GM12878 (cell line): ENCODE measurements at regions of chr11 and their contacts with region 1.

Region 1: GRCh38 chr11:75142714-75143419 is 8.0 kb upstream of the SLCO2B1 start:
- DNase-seq: peak; percentile 55
- ATAC-seq: peak; percentile 78
- H3K4me3 ChIP-seq: no peak overlapping the region
- H3K27ac ChIP-seq: no peak overlapping the region
- H3K4me1 ChIP-seq: peaks cover 24% of the 10 kb centered on the region
- H3K27me3 ChIP-seq: no peaks in the 10 kb centered on the region
- CTCF ChIP-seq: no peak
- EP300 ChIP-seq: no peak
- POLR2A ChIP-seq: no peak
- RAD21 ChIP-seq: no peak

Region 2: GRCh38 chr11:75100314-75100713 is 42.6 kb before region 1 on chr11:
- CTCF ChIA-PET with region 1: interaction called, 20 read pairs
- POLR2A ChIA-PET with region 1: no interaction called
- RAD21 ChIA-PET with region 1: interaction called, 4 read pairs
- SMC1A ChIA-PET with region 1: interaction called, 4 read pairs
- in situ Hi-C with region 1: no loop called
- intact Hi-C with region 1: no loop called
- DNase-seq: peak; percentile 78
- ATAC-seq: peak; percentile 97
- H3K4me3 ChIP-seq: peak overlapping the region; percentile 1; the same call in 1 of the 2 replicates
- H3K27ac ChIP-seq: peak overlapping the region; percentile 57
- H3K4me1 ChIP-seq: peaks cover 8% of the 10 kb centered on the region; the same call in 1 of the 2 replicates
- H3K27me3 ChIP-seq: no peaks in the 10 kb centered on the region
- CTCF ChIP-seq: no peak
- EP300 ChIP-seq: no peak; a peak in 1 of 4 replicates
- POLR2A ChIP-seq: no peak
- RAD21 ChIP-seq: no peak

Region 3: GRCh38 chr11:75113030-75113429 is 29.8 kb before region 1 on chr11:
- CTCF ChIA-PET with region 1: interaction called, 13 read pairs
- POLR2A ChIA-PET with region 1: interaction called, 3 read pairs
- RAD21 ChIA-PET with region 1: no interaction called
- SMC1A ChIA-PET with region 1: interaction called, 3 read pairs
- in situ Hi-C with region 1: no loop called
- intact Hi-C with region 1: no loop called
- DNase-seq: no peak
- ATAC-seq: no peak
- H3K4me3 ChIP-seq: no peak overlapping the region
- H3K27ac ChIP-seq: no peak overlapping the region
- H3K4me1 ChIP-seq: no peaks in the 10 kb centered on the region
- H3K27me3 ChIP-seq: no peaks in the 10 kb centered on the region
- CTCF ChIP-seq: no peak
- EP300 ChIP-seq: no peak
- POLR2A ChIP-seq: no peak
- RAD21 ChIP-seq: no peak

Region 4: DNA sequence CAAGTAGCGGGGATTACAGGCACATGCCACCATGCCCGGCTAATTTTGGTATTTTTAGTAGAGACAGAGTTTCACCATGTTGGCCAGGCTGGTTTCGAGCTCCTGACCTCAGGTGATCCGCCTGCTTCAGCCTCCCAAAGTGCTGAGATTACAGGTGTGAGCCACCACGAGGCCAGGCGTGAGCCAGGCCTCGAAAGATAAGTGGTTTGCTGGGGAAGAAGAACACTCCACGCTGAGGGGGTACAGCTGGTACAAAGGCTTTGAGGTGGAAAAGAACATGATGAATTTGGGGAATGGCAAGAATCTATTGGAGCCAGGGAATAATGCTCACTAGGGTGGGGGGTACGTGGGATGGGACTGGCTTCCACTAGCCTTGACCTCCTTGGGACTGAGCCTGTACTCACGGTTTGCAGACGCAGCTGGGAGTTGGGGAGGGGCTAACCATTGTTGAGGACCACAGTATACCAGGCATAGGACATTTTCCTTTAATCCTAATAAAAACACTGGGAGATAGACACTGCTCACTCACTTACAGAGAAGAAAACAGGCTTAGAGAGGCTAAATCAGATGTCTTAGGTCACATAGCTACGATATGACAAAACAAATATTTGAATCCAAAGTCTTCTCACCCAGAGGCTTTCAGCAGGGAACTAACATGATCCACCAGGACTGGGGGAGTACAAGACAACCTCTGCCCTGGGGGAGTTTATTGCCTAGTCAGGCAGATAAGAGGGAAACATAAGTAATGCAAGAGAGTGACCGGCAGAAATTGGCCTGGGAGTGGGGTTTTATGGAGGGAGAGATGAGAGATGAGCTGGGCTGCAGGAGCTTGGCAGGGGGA is 12.9 kb after region 1 on chr11:
- CTCF ChIA-PET with region 1: interaction called, 24 read pairs
- POLR2A ChIA-PET with region 1: no interaction called
- RAD21 ChIA-PET with region 1: interaction called, 3 read pairs
- SMC1A ChIA-PET with region 1: interaction called, 4 read pairs
- in situ Hi-C with region 1: no loop called
- intact Hi-C with region 1: no loop called
- DNase-seq: no peak
- ATAC-seq: no peak
- H3K4me3 ChIP-seq: no peak overlapping the region
- H3K27ac ChIP-seq: no peak overlapping the region
- H3K4me1 ChIP-seq: no peaks in the 10 kb centered on the region
- H3K27me3 ChIP-seq: no peaks in the 10 kb centered on the region; a peak in 1 of 4 replicates
- CTCF ChIP-seq: no peak
- EP300 ChIP-seq: no peak
- POLR2A ChIP-seq: no peak
- RAD21 ChIP-seq: no peak

Region 5: DNA sequence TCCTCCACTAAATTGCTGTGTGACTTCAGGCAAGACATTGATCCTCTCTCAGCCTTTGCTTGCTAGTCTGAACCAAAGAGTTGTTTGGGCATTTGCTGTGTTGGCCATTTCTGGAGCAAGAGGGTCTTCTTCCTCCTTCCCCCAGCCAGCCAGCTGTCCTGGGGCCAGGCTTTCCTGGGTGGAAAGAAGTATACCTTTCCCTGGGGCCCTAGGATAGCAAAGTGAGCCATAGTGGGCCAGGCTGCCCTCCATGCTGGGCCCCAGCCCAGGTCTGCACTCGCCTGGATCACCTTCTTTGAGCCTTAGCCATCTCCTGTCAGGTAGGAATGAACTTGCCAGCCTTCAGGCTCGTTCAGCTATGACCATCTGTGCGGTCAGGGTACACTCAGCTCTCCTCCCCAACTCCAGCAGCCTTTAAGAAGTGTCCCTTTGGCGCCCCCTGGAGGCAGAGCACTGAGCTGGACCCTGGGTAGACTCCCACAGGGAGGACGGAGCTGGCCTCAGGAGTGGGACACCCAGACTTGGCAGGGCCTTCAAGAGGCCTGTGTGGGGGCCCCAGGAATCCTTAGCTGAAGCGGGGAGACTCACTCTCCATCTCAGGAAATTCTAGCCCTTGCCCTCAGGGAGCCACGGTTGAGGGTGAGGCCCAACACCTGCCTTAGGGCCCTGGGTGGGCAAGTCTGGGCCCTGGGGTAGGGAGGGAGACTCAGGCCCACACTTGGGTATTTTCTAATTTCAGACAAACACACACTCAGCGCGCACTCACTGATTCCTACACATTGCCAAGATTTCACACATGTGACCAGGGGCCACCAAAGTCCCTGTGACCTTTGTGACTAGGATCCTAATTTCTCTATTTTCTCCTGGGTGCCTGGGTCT is 62.1 kb after region 1 on chr11:
- CTCF ChIA-PET with region 1: interaction called, 232 read pairs
- POLR2A ChIA-PET with region 1: interaction called, 4 read pairs
- RAD21 ChIA-PET with region 1: interaction called, 132 read pairs
- SMC1A ChIA-PET with region 1: interaction called, 111 read pairs
- in situ Hi-C with region 1: loop called (anchors 5 kb)
- intact Hi-C with region 1: loop called (anchors 1 kb)
- DNase-seq: peak; percentile 8
- ATAC-seq: peak; percentile 100
- H3K4me3 ChIP-seq: no peak overlapping the region
- H3K27ac ChIP-seq: no peak overlapping the region
- H3K4me1 ChIP-seq: no peaks in the 10 kb centered on the region
- H3K27me3 ChIP-seq: peaks cover 0 to 4% of the 10 kb centered on the region in 2 experiments; a peak in 1 of 4 replicates
- CTCF ChIP-seq: peak; percentile 87 to 94 (median 89)
- EP300 ChIP-seq: no peak
- POLR2A ChIP-seq: no peak
- RAD21 ChIP-seq: peak; percentile 84